Mammary epithelial cell (primary cell): ENCODE measurements at regions of chr2 and their contacts with region 1.

Region 1: GRCh38 chr2:119049968-119050704 is 108.1 kb downstream of the MARCO start:
- DNase-seq: no peak
- H3K4me3 ChIP-seq: no peak overlapping the region
- H3K27ac ChIP-seq: no peak overlapping the region
- H3K4me1 ChIP-seq: no peaks in the 10 kb centered on the region
- H3K27me3 ChIP-seq: peaks cover 8% of the 10 kb centered on the region
- CTCF ChIP-seq: no peak

Region 2: DNA sequence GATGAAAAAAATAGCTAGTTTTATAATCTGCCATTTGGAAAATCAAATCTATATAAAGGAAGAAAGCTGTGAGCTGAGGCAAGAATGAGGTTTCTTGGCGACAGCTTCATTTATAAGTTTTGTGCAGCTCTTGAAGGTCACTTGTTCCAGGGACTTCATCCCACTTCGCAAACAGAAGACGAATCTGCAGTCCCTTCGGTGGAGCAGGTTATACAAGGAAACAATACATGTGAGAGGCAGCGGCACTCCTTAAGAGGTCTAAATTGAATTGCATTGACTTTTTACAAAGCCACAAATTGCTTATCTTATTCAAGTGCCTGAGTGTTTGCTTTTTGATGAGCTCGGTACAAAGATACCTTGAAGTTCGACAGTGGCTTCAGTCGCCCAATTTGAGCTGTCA is 36.2 kb after region 1 on chr2:
- CTCF ChIA-PET with region 1: no interaction called
- dilution Hi-C with region 1: no loop called
- in situ Hi-C with region 1: no loop called
- intact Hi-C with region 1: loop called (anchors 1 kb)
- DNase-seq: no peak
- H3K4me3 ChIP-seq: no peak overlapping the region
- H3K27ac ChIP-seq: no peak overlapping the region
- H3K4me1 ChIP-seq: no peaks in the 10 kb centered on the region
- H3K27me3 ChIP-seq: no peaks in the 10 kb centered on the region
- CTCF ChIP-seq: no peak